ENCODE measurements at regions of chr3 and their contacts with region 1.

Region 1: DNA sequence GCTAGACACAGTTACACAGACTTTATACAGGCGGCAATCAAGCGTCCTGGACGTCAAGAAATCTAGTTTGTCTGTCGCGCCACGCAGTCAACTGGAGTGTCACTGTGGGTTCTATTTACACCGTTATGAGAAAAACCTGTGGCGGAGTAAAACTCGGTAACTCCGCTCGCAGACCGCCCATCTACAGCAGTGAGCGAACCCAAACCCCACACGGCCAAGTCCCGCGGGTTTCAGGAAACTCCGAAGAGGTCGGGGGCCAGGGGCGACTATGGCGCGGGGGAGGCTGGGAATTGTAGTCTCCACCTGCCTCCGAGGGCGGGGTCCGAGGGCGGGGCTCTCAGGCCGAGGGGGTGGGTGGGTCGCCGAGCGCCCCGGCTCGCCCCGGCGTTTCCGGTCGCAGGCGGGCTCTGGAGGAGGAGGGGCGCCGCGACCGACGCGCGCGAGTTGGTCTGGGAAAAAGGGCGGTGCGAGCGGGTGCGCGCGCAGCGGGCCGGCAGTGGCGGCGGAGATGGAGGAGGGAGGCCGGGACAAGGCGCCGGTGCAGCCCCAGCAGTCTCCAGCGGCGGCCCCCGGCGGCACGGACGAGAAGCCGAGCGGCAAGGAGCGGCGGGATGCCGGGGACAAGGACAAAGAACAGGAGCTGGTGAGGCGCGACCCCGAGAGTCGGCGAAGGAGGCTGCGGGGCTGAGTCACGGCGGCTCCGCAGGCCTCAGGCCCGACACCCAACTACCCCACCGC is at the start of gene PSMD2:
- DNase-seq: peak; percentile 99
- ATAC-seq: peak; percentile 96
- H3K4me3 Mint-ChIP-seq: peak within 1 kb of the TSS; percentile 84
- H3K27ac Mint-ChIP-seq: peak within 1 kb of the TSS; percentile 81
- H3K4me1 Mint-ChIP-seq: peaks cover 19% of the 10 kb centered on the region
- H3K27me3 Mint-ChIP-seq: no peaks in the 10 kb centered on the region
- total RNA-seq, gene PSMD2: 207 to 236 TPM

Region 2: DNA sequence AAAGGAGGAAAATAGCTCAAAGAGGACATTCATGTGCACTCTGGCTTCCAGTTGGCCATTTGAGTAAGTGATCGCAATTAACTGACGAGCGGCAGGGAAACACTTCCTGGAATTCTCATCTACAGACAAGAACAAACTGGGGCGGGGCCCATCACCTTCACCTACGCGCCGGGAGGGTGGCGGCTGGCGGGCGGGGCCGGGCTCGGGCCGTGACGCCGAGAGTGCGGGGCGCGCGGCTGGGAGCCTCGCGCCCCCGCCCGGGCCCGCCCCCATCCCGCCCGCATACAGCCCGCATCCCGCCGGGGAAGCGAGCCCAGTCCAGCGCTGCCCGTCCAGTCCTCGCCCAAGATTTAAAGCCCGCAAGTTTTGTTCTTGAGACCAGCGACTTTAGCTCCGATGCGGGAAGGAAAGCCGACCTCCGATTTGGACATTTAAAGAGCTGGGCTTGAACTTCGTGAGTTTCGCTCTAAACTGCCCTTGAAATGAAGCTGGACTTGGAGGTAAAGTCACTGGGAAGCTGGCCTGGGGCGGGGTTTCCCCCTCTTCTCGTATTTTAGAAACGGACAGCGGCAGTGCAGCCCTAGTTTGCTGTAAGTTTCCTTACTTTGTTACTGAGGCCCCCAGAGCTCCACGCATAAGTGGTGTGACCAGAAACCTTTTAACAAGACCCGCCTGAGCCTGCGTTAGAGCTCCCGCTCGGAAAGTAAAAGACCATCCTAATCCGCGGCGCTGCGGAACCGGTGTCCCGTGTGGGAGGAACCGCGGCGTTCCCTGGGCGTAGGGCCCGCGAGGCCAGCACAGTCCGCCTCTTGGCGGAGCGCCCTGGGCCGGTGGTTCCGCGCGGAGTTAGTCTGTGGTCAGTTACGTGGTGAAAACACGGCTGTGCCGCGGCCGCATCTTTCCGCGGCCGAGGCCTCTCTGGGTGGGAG is 1045.7 kb before region 1 on chr3 and contains the start of gene B3GNT5:
- CTCF ChIA-PET with region 1: no interaction called
- POLR2A ChIA-PET with region 1: no interaction called
- intact Hi-C with region 1: no loop called
- DNase-seq: peak; percentile 76
- ATAC-seq: peak; percentile 56
- H3K4me3 Mint-ChIP-seq: peak within 1 kb of the TSS; percentile 77
- H3K27ac Mint-ChIP-seq: peak within 1 kb of the TSS; percentile 79
- H3K4me1 Mint-ChIP-seq: peaks cover 29% of the 10 kb centered on the region
- H3K27me3 Mint-ChIP-seq: peaks cover 14% of the 10 kb centered on the region
- total RNA-seq, gene B3GNT5: 20.2 to 22.8 TPM

Region 3: DNA sequence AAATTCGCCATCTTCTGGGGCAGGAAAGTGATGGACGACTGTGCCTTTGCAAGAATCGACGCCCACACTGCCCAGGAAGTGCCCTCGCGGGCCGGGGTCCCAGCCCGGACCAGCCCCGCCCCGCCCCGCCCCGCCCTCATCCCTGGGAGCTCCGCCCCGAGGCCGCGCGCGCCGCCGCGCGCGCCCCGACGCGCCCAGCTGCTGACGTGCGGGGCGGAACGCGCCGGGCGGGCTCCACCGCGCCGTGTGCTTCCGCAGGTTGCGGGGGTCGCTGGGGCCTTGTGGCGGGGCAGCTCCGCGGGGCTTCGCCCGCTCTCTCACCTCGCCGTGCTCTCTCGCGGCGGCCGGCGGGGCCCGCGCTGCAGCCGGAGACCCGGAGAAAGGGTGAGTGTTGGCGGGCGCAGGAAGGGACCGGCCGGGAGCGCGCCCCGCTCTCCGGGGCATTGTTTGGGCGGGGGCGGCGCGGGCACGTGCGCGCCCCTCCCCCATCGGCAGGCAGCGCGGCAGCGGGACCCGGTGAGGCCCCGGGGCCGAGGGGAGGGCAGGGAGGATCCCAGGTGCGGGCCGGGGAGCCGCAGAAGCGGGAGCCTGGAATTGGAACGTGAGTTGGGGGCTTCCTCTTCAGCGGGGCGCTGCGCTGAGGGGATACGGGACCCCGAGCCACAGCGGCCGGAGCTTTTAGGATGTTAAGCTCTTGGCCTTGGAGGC is 601.2 kb before region 1 on chr3 and contains the start of gene YEATS2:
- CTCF ChIA-PET with region 1: no interaction called
- POLR2A ChIA-PET with region 1: no interaction called
- intact Hi-C with region 1: loop called in 1 of 2 experiments (anchors 2 kb)
- DNase-seq: peak; percentile 91
- ATAC-seq: peak; percentile 81
- H3K4me3 Mint-ChIP-seq: peak within 1 kb of the TSS; percentile 91
- H3K27ac Mint-ChIP-seq: peak within 1 kb of the TSS; percentile 89
- H3K4me1 Mint-ChIP-seq: peaks cover 31% of the 10 kb centered on the region
- H3K27me3 Mint-ChIP-seq: no peaks in the 10 kb centered on the region
- total RNA-seq, gene YEATS2: 59.4 to 73.9 TPM

Region 4: DNA sequence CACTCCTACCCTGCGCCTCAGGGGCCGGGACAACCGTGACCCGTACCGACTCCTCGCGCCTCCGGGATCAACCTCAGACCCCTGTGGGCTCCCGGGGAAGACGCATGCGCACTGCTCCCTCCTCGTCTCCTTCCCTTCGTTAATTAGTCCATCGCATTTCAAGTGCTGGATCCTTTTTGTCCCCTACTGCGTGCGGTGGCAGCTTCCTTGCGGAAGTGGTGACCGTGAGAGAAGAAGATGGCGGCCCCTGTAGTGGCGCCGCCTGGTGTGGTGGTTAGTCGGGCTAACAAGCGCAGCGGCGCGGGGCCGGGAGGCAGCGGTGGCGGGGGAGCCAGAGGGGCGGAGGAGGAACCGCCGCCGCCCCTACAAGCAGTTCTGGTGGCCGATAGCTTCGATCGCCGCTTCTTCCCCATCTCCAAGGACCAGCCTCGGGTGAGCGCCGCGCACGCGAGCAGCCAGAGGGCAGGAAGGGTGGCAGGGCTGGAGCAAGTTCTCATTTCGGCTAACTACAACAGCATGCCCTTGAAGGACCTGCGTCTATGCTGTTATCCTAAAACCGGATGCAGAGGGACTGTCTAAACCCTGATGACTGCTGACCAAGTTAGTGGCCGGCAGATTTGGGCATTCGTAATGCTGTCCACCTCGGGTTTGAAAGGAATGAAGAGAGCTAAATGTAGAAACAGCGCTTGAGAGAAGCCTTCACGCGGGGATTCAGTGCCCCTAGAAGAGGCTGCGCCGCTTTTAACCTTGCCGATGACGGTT is 163.6 kb before region 1 on chr3 and contains the start of gene EIF2B5:
- CTCF ChIA-PET with region 1: no interaction called
- POLR2A ChIA-PET with region 1: no interaction called
- intact Hi-C with region 1: loop called in 1 of 2 experiments (anchors 1 kb)
- DNase-seq: peak; percentile 93
- ATAC-seq: peak; percentile 90
- H3K4me3 Mint-ChIP-seq: peak within 1 kb of the TSS; percentile 97
- H3K27ac Mint-ChIP-seq: peak within 1 kb of the TSS; percentile 92
- H3K4me1 Mint-ChIP-seq: peaks cover 29% of the 10 kb centered on the region
- H3K27me3 Mint-ChIP-seq: no peaks in the 10 kb centered on the region
- total RNA-seq, gene EIF2B5: 46.4 to 60.6 TPM

Region 5: DNA sequence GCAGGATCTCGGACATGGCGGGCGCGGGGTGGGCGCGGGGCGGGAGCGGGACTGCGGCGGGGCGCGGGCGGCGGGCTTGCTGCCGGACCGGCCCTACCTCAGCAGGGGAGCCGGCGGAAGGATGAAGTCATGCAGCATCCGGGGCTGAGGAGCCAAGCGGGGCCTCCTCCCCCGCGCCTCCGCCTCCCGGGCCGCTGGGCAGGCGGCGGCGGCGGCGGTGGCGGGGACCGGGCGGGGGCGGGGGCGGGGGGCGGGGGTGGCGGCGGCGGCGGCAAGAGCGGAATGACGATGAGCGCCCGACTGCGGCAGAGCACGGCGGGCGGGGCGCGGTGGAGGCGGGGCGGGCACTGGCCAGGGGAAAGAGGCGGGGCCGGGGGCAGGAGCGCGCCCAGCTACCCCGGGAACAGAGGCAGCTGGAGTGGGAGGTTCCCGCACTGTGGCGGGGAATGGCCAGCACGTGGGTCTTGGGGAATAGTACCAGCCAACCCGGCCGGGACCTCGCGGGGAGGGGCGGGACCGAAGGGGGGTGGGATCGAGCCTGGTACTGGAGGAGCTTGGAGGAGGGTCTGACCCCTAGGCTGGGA is 37.6 kb before region 1 on chr3 and contains the start of gene CAMK2N2:
- CTCF ChIA-PET with region 1: no interaction called
- POLR2A ChIA-PET with region 1: no interaction called
- intact Hi-C with region 1: loop called in 1 of 2 experiments (anchors 1 kb)
- DNase-seq: peak; percentile 73
- ATAC-seq: peak; percentile 59
- H3K4me3 Mint-ChIP-seq: peak within 1 kb of the TSS; percentile 73
- H3K27ac Mint-ChIP-seq: no peak within 1 kb of the TSS
- H3K4me1 Mint-ChIP-seq: peaks cover 20% of the 10 kb centered on the region
- H3K27me3 Mint-ChIP-seq: peaks cover 31% of the 10 kb centered on the region
- total RNA-seq, gene CAMK2N2: 0.18 to 0.25 TPM

Region 6: GRCh38 chr3:184335661-184336546 is 37.0 kb after region 1 on chr3:
- CTCF ChIA-PET with region 1: interaction called, 3 read pairs
- POLR2A ChIA-PET with region 1: no interaction called
- intact Hi-C with region 1: loop called (anchors 1 kb)
- DNase-seq: peak; percentile 92
- ATAC-seq: peak; percentile 50
- H3K4me3 Mint-ChIP-seq: peak overlapping the region; percentile 75
- H3K27ac Mint-ChIP-seq: peak overlapping the region; percentile 85
- H3K4me1 Mint-ChIP-seq: peaks cover 62% of the 10 kb centered on the region
- H3K27me3 Mint-ChIP-seq: no peaks in the 10 kb centered on the region

Region 7: DNA sequence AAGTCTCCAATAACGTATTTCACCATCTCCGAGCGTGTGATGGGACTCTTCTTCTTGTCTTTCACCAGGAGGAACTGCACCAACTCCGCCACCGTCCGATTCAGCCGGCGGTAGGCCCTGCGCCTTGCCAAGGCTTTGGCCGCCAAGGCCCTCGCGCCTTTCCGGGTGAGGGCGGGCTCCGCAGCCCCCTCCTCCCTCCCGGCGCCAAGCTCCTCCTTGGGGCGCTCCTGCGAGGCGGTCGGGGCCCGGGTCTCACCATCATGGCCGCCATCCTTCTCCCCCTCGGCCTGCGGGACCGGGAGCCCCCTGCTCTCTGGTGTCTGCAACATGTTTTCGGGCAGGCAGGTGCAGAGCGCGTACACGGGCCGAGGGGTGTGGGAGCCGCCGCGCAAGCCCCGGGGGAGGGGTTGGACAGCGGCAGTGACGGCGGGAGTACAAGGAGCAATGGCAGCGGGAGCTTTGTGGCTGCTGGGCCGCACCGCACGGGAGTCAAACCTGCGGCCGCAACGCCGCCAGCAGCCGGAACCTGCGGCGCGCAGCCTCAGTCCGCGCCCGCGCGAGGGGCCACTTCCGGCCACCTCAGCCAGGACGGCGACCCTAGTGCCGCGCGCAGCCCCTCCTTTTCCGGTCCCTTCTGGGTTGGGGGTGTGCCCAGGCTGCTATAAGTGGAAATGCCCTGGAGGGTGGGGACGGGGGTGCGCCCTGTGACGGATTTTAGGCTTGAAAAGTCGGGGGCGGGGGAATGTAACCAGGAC is 412.7 kb after region 1 on chr3 and contains the start of gene MAGEF1:
- CTCF ChIA-PET with region 1: no interaction called
- POLR2A ChIA-PET with region 1: no interaction called
- intact Hi-C with region 1: loop called in 1 of 2 experiments (anchors 1 kb)
- DNase-seq: peak; percentile 85
- ATAC-seq: peak; percentile 87
- H3K4me3 Mint-ChIP-seq: peak within 1 kb of the TSS; percentile 80
- H3K27ac Mint-ChIP-seq: peak within 1 kb of the TSS; percentile 97
- H3K4me1 Mint-ChIP-seq: peaks cover 32% of the 10 kb centered on the region
- H3K27me3 Mint-ChIP-seq: peaks cover 2% of the 10 kb centered on the region
- total RNA-seq, gene MAGEF1: 13.6 to 14.3 TPM

Measured in activated CD4-positive, alpha-beta T cell treated with anti-CD3 and anti-CD28 coated beads for 36 hours (primary cell).